ENCODE measurements at regions of chr11 and their contacts with region 1.

Region 1: GRCh38 chr11:11640996-11641395 is 19.2 kb upstream of the GALNT18 start:
- DNase-seq: no peak
- H3K4me3 ChIP-seq: no peak overlapping the region
- H3K27ac ChIP-seq: no peak overlapping the region
- H3K4me1 ChIP-seq: no peaks in the 10 kb centered on the region
- H3K27me3 ChIP-seq: no peaks in the 10 kb centered on the region; a peak in 1 of 7 replicates
- CTCF ChIP-seq: no peak
- EP300 ChIP-seq: no peak
- POLR2A ChIP-seq: no peak
- RAD21 ChIP-seq: no peak

Region 2: DNA sequence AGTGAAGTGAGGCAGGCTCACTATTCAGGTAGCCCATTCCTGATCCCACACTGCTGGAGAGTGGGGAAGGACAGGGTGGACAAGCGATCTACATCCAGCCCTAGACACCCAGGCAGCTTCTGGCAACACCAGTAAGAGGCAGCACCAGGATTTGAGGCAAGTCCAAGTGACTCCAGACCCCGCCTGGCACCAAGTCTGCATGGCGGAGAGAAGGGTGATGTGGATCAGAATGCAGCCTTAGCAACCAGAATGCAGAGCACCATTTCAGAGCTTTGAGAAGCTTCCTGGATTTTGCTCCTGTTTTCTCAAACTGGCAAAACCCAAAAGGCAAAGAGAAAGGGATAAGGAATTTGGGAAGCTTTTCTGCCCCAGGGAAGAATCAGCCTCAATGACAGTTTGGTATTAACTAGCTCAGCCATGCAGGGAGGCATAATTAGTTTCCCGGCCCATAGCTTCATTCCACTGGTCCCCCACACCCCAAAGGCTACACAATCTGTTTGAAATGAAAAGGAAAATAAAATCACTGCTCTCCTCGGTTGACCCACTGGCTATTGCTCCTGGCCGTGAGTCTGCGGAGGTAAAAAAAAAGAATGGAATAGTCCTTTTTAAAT is 36.5 kb before region 1 on chr11:
- CTCF ChIA-PET with region 1: no interaction called
- POLR2A ChIA-PET with region 1: no interaction called
- DNase-seq: no peak
- H3K4me3 ChIP-seq: no peak overlapping the region
- H3K27ac ChIP-seq: no peak overlapping the region
- H3K4me1 ChIP-seq: peaks cover 0 to 5% (median 0%) of the 10 kb centered on the region in 4 experiments; a peak in 4 of 7 replicates
- H3K27me3 ChIP-seq: no peaks in the 10 kb centered on the region
- CTCF ChIP-seq: no peak
- EP300 ChIP-seq: no peak
- POLR2A ChIP-seq: no peak
- RAD21 ChIP-seq: no peak

Region 3: GRCh38 chr11:11659567-11660362 is 18.8 kb after region 1 on chr11:
- CTCF ChIA-PET with region 1: interaction called, 13 read pairs
- POLR2A ChIA-PET with region 1: no interaction called
- DNase-seq: no peak
- H3K4me3 ChIP-seq: no peak overlapping the region
- H3K27ac ChIP-seq: no peak overlapping the region
- H3K4me1 ChIP-seq: peaks cover 4 to 11% (median 7%) of the 10 kb centered on the region in 4 experiments
- H3K27me3 ChIP-seq: no peaks in the 10 kb centered on the region
- CTCF ChIP-seq: peak in 2 of 3 experiments; percentile 24 to 40; a peak in 2 of 4 replicates
- EP300 ChIP-seq: no peak
- POLR2A ChIP-seq: no peak
- RAD21 ChIP-seq: peak; percentile 16 to 39; a peak in 2 of 4 replicates

Measured in H1 (cell line).